Common myeloid progenitor, CD34-positive (primary cell): ENCODE measurements at regions of chr12 and their contacts with region 1.

Region 1: GRCh38 chr12:89542912-89543592 is 17.2 kb upstream of the POC1B start:
- DNase-seq: peak; percentile 80 to 89 (median 85)
- H3K4me3 ChIP-seq: peak overlapping the region in 1 of 7 experiments; percentile 25
- H3K27ac ChIP-seq: no peak overlapping the region
- H3K4me1 ChIP-seq: peaks cover 8 to 28% (median 18%) of the 10 kb centered on the region in 4 experiments
- H3K27me3 ChIP-seq: no peaks in the 10 kb centered on the region

Region 2: DNA sequence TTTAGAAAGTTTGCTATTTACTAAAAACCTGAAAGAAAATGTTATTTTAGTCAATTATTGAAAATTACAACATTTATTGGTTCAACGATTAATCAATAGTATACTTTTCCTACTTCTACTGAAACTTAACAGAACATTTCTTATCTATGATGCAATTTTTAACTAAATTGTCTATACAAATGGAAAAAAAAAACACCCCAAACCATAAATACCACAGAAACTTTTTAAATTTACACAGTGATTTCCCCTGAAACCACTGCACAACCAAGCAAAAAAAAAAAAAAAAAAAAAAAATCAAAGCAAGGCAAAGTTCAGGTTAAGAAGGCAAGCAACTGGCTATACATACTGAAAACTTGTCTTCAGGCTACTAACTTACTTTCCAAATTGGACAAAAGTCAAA is 54.7 kb after region 1 on chr12:
- CTCF ChIA-PET with region 1: no interaction called
- POLR2A ChIA-PET with region 1: no interaction called
- DNase-seq: no peak
- H3K4me3 ChIP-seq: no peak overlapping the region
- H3K27ac ChIP-seq: no peak overlapping the region
- H3K4me1 ChIP-seq: no peaks in the 10 kb centered on the region
- H3K27me3 ChIP-seq: no peaks in the 10 kb centered on the region

Region 3: GRCh38 chr12:90013409-90013808 is 470.4 kb after region 1 on chr12:
- CTCF ChIA-PET with region 1: interaction called, 23 read pairs
- POLR2A ChIA-PET with region 1: no interaction called
- DNase-seq: peak; percentile 18 to 71 (median 64)
- H3K4me3 ChIP-seq: no peak overlapping the region
- H3K27ac ChIP-seq: no peak overlapping the region
- H3K4me1 ChIP-seq: no peaks in the 10 kb centered on the region
- H3K27me3 ChIP-seq: no peaks in the 10 kb centered on the region

Region 4: GRCh38 chr12:90102957-90103652 is 560.1 kb after region 1 on chr12:
- CTCF ChIA-PET with region 1: interaction called, 20 read pairs
- POLR2A ChIA-PET with region 1: no interaction called
- DNase-seq: peak; percentile 58 to 75 (median 67)
- H3K4me3 ChIP-seq: peak overlapping the region in 1 of 7 experiments; percentile 45
- H3K27ac ChIP-seq: no peak overlapping the region
- H3K4me1 ChIP-seq: peaks cover 0 to 2% (median 0%) of the 10 kb centered on the region in 4 experiments
- H3K27me3 ChIP-seq: no peaks in the 10 kb centered on the region